ENCODE measurements at regions of chr13 and their contacts with region 1.

Region 1: DNA sequence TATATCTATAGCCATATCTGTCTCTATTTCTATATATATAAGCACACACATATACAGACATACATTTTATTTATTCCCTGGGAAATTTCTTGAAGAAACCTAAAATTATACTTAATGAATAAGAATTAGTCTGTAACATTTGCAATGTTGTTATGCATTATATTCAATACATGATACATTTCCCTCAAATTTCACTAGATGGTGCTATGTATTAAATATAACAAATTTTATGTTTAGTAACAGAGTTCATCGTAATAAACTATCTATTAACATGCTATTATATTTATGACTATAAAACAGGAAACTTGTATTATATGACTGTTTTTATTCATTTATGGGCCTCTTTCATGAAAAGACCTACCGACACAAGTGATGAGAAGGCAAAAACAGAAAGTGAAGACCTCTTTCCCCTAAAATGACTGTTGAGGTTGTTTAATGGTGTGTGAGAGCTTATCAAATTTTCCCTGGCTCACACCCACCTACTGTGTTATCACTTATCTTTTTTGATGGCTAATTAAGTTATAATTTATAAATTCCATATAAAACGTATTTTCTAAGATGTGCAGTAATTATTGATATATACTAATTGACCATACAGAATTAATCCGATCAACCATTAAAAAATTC is 881.9 kb downstream of the SLITRK6 start:
- DNase-seq: no peak
- ATAC-seq: no peak
- H3K4me3 ChIP-seq: no peak overlapping the region
- H3K27ac ChIP-seq: no peak overlapping the region
- H3K4me1 ChIP-seq: no peaks in the 10 kb centered on the region
- H3K27me3 ChIP-seq: no peaks in the 10 kb centered on the region
- CTCF ChIP-seq: no peak
- POLR2A ChIP-seq: no peak

Region 2: DNA sequence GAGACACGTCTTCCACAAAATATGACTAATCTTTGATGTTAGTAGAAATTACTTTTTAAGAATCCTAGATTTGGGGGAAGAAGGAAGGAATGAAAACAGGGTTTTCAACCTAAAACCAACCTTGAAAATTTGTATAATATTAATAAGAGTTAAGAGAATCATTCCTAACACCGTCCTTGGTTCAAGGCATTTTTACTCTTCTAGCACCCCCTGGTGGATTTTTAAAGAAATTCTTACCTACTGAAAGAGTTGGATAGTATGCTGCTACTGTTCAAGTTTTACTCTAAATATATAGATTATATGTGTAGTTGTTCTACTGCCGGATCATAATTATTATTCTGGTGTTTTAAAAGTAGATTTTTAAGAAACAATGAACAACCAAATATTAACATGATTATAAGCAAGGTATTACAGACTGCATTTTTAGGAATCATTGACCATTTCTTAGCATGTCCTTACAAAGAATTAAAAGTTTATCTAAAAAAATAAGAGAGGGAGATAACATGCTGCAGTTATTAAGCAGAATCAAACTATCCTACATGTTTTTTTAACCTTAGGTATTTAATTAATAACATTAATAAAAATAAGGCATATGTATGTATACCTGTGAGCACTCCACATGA is 889.3 kb after region 1 on chr13:
- in situ Hi-C with region 1: loop called (anchors 10 to 25 kb)
- intact Hi-C with region 1: no loop called
- DNase-seq: no peak
- ATAC-seq: no peak
- H3K4me3 ChIP-seq: no peak overlapping the region
- H3K27ac ChIP-seq: no peak overlapping the region
- H3K4me1 ChIP-seq: no peaks in the 10 kb centered on the region
- H3K27me3 ChIP-seq: no peaks in the 10 kb centered on the region
- CTCF ChIP-seq: peak in 1 of 5 experiments; percentile 31
- POLR2A ChIP-seq: no peak